Caco-2 (cell line): ENCODE measurements at regions of chr3 and their contacts with region 1.

Region 1: DNA sequence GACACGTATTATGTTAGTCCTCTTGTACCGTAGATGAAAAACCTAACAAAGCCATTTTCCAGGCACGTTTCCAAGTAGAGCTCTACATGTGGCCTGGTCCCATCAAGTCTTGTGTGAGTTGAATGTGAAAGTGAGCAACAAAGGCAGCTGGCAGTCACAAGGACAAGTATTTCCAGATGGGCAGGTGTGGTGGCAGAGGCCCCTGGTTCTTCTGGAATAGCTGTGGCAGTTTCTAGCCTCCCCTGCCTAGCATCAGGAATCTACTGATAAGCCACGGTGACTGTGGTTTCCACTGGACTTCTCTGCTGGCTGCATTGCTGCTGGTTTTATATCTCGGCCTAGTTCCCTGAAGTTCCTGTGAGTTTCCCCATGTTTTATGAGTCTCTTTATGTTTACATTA is 117.7 kb downstream of the GOLIM4 start:
- DNase-seq: peak; percentile 46 to 74
- H3K4me3 ChIP-seq: no peak overlapping the region
- H3K4me3 Mint-ChIP-seq: no peak overlapping the region
- H3K27ac Mint-ChIP-seq: no peak overlapping the region
- H3K4me1 ChIP-seq: peaks cover 21% of the 10 kb centered on the region
- H3K4me1 Mint-ChIP-seq: peaks cover 10% of the 10 kb centered on the region
- H3K27me3 ChIP-seq: no peaks in the 10 kb centered on the region
- H3K27me3 Mint-ChIP-seq: no peaks in the 10 kb centered on the region
- CTCF ChIP-seq: no peak

Region 2: DNA sequence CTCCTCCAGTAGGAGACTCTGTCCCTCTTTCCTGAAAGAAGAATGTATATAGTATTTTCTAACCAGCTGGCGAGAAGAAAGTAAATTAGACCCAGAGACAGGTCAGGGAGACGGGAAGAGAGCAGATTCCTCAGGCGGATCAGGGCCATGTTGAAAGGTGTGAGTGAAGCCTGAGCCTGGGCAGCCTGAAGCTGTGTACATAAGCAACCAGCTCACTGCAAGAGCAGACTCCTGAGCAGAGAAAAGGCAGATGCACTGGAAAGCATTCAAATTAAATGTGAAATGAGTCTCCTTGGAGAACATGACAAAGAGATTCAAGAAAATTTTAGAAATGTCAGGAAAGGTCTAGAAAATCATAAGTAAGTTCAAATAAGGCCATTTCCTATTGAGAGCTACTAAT is 48.1 kb before region 1 on chr3:
- CTCF ChIA-PET with region 1: no interaction called
- POLR2A ChIA-PET with region 1: no interaction called
- intact Hi-C with region 1: loop called (anchors 5 kb)
- DNase-seq: no peak
- H3K4me3 ChIP-seq: no peak overlapping the region
- H3K4me3 Mint-ChIP-seq: no peak overlapping the region
- H3K27ac Mint-ChIP-seq: no peak overlapping the region
- H3K4me1 ChIP-seq: no peaks in the 10 kb centered on the region
- H3K4me1 Mint-ChIP-seq: no peaks in the 10 kb centered on the region
- H3K27me3 ChIP-seq: no peaks in the 10 kb centered on the region
- H3K27me3 Mint-ChIP-seq: peaks cover 3% of the 10 kb centered on the region
- CTCF ChIP-seq: no peak

Region 3: DNA sequence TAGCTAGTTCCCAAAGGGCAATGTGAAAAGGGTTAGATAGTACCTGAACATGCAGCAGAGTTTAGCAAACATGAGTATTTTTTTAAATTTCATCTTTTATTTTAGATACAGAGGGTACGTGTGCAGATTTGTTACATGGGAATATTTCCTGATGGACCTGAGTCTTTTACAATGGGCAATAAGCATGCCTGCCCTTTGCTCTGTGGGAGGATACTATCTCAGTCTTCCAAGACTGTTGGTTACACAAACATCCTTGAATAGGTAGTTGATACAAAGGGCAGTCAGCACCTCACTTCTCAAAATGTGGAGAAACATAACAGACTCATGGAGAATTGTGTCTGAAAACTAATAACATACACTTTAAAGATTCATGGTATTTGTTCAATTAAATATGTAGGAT is 14.3 kb after region 1 on chr3:
- CTCF ChIA-PET with region 1: no interaction called
- POLR2A ChIA-PET with region 1: no interaction called
- intact Hi-C with region 1: loop called (anchors 2 kb)
- DNase-seq: peak in 1 of 2 experiments; percentile 3
- H3K4me3 ChIP-seq: no peak overlapping the region
- H3K4me3 Mint-ChIP-seq: no peak overlapping the region
- H3K27ac Mint-ChIP-seq: no peak overlapping the region
- H3K4me1 ChIP-seq: peaks cover 13% of the 10 kb centered on the region
- H3K4me1 Mint-ChIP-seq: no peaks in the 10 kb centered on the region
- H3K27me3 ChIP-seq: no peaks in the 10 kb centered on the region
- H3K27me3 Mint-ChIP-seq: no peaks in the 10 kb centered on the region
- CTCF ChIP-seq: no peak

Region 4: DNA sequence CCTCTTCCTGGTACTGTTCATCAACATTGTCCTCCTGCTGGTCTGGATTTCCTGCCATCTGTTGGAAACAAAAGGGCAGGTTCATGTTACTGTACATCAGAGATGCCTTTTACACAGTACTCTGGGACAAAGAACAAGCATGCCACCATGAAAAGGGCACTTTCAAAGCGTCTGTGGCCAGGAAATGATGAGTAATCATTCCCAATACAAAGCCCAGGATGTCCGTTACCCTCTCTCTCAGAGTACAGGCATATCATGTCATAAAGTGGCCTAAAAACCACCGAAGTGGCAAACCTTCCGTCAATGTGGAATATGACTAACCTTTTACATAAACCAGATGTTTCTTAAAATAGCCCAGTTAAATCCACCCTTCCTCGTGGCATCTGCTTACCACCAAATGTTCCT is 46.5 kb after region 1 on chr3:
- CTCF ChIA-PET with region 1: no interaction called
- POLR2A ChIA-PET with region 1: no interaction called
- intact Hi-C with region 1: loop called (anchors 5 kb)
- DNase-seq: no peak
- H3K4me3 ChIP-seq: no peak overlapping the region
- H3K4me3 Mint-ChIP-seq: no peak overlapping the region
- H3K27ac Mint-ChIP-seq: no peak overlapping the region
- H3K4me1 ChIP-seq: no peaks in the 10 kb centered on the region
- H3K4me1 Mint-ChIP-seq: peaks cover 7% of the 10 kb centered on the region
- H3K27me3 ChIP-seq: no peaks in the 10 kb centered on the region
- H3K27me3 Mint-ChIP-seq: no peaks in the 10 kb centered on the region
- CTCF ChIP-seq: no peak